PC-9 (cell line): ENCODE measurements at regions of chr4 and their contacts with region 1.

Region 1: DNA sequence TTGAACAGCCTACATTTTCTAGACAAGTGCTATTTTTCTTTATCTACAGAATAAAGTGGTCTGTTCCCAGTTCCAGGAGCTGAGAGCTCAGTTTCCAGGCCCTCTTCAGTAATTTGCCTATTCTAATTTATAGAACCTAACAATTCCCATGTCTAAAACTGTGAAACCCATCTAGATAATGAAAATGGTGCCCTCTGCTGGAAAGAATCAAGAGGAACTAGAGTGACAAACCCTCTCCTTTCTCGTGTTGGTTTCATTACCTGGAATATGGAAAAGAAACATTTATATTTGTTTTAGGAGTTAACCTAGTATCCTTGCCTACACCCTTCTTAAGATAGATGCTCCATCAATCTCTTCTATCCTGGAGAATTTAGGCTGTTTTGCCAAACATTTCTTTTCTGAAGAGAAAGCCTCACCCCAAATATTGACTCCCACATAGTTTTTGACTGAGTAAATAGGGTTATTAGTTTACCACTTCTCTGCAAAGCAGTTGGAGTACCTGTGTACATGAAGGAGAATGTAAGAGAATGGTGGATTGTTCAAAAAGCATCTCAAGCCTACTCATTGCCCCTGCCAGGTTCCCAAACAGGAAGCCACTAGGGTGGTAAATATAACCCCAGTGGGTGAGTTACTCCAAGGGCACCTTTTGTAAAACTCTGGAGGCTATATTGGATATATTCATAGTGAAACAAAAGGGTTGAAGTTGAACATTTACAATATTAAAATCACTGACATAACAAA is 121.6 kb downstream of the RASL11B start:
- DNase-seq: peak; percentile 5 to 36
- H3K4me3 ChIP-seq: no peak overlapping the region
- H3K27ac ChIP-seq: no peak overlapping the region
- H3K4me1 ChIP-seq: peaks cover 6% of the 10 kb centered on the region; the same call in 1 of the 2 replicates
- H3K27me3 ChIP-seq: no peaks in the 10 kb centered on the region
- CTCF ChIP-seq: peak; percentile 79

Region 2: DNA sequence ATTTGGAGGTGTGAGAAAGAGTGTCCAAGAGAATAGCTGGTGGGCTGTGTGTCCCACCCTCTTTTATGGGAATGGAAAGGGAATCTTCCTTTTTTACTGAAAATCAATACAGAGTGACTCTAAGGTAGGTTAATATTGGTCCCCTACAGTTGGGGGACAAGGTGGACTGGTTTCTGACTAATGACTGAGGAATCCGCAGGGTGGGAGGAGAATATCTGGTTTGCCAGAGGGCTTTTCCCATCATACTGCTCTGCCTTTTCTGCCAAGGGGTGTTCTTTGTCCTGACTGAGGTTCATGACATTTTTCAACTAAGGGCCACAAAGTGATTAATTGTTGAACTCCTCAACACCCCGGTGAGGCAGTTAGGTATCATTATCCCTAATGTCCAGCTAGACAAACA is 671.0 kb before region 1 on chr4:
- CTCF ChIA-PET with region 1: no interaction called
- POLR2A ChIA-PET with region 1: no interaction called
- intact Hi-C with region 1: no loop called
- DNase-seq: peak; percentile 51 to 88
- H3K4me3 ChIP-seq: no peak overlapping the region
- H3K27ac ChIP-seq: peak overlapping the region; percentile 93
- H3K4me1 ChIP-seq: peaks cover 36% of the 10 kb centered on the region
- H3K27me3 ChIP-seq: no peaks in the 10 kb centered on the region
- CTCF ChIP-seq: no peak

Region 3: DNA sequence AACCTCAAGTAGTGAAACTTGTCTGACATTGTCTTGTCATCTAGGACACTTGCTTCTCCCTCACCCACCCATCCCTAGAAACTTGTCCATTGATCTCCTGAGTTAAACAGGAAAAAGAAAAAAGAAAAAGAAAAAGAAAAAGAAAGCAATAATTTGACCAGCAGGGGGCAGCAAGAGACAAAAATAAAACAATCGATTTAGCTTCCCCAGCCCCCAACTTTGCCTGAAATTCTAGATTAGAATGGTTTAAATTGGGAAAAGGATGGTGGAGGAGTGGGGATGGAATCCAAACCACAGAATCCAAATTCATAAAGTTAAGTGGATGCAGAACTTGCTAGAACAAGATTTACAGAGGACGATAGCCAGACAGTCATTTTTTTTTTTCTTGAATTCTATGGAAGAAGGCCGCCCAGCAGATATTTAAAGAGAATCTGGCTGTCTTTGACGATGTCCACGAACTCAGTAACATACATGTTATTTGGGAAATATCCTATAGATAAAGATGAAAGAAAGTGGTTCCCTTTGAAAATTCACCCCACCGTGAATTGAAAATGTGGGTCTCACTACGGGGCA is 607.5 kb before region 1 on chr4:
- CTCF ChIA-PET with region 1: no interaction called
- POLR2A ChIA-PET with region 1: no interaction called
- intact Hi-C with region 1: loop called (anchors 2 kb)
- DNase-seq: no peak
- H3K4me3 ChIP-seq: no peak overlapping the region
- H3K27ac ChIP-seq: no peak overlapping the region
- H3K4me1 ChIP-seq: no peaks in the 10 kb centered on the region
- H3K27me3 ChIP-seq: no peaks in the 10 kb centered on the region
- CTCF ChIP-seq: peak; percentile 84

Region 4: GRCh38 chr4:52588097-52588782 is 395.5 kb before region 1 on chr4:
- CTCF ChIA-PET with region 1: interaction called, 14 read pairs
- POLR2A ChIA-PET with region 1: no interaction called
- intact Hi-C with region 1: loop called (anchors 5 kb)
- DNase-seq: peak in 1 of 2 experiments; percentile 5
- H3K4me3 ChIP-seq: no peak overlapping the region
- H3K27ac ChIP-seq: no peak overlapping the region
- H3K4me1 ChIP-seq: no peaks in the 10 kb centered on the region
- H3K27me3 ChIP-seq: no peaks in the 10 kb centered on the region
- CTCF ChIP-seq: peak; percentile 55

Region 5: GRCh38 chr4:52721968-52722815 is 261.5 kb before region 1 on chr4:
- CTCF ChIA-PET with region 1: no interaction called
- POLR2A ChIA-PET with region 1: no interaction called
- intact Hi-C with region 1: loop called (anchors 5 kb)
- DNase-seq: peak; percentile 88 to 92
- H3K4me3 ChIP-seq: peak overlapping the region; percentile 79
- H3K27ac ChIP-seq: peak overlapping the region; percentile 42
- H3K4me1 ChIP-seq: peaks cover 11% of the 10 kb centered on the region; the same call in 1 of the 2 replicates
- H3K27me3 ChIP-seq: no peaks in the 10 kb centered on the region
- CTCF ChIP-seq: no peak

Region 6: DNA sequence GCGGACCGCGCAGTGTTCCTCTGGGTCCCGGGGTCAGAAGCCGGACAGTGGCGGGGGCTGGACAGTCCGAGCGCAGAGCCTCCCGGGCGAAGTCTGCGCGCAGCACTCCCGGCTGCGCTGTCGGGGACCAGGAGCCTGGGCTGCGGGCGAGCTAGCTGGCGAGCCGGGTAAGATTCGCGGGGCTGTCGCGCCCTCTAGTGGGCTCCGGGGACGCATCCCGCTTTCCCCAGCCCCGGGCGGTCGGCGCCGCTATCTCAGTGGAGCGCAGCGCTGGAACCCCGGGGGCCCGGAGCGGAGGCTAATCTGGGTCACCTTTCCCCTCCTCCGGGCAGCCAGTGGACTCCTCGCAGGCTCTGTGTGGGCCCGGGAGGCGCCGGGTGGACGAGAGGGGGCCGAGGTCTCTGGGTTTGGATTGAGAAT is 1249.6 kb after region 1 on chr4:
- CTCF ChIA-PET with region 1: no interaction called
- POLR2A ChIA-PET with region 1: no interaction called
- intact Hi-C with region 1: loop called (anchors 10 kb)
- DNase-seq: peak in 1 of 2 experiments; percentile 67
- H3K4me3 ChIP-seq: no peak overlapping the region; the same call in 1 of the 2 replicates
- H3K27ac ChIP-seq: no peak overlapping the region
- H3K4me1 ChIP-seq: no peaks in the 10 kb centered on the region
- H3K27me3 ChIP-seq: no peaks in the 10 kb centered on the region
- CTCF ChIP-seq: peak; percentile 67